ENCODE measurements at regions of chr14 and their contacts with region 1.

Region 1: GRCh38 chr14:68788996-68789820 is 3.7 kb downstream of the ZFP36L1 start:
- DNase-seq: peak; percentile 88
- ATAC-seq: peak; percentile 11
- H3K4me3 ChIP-seq: peak overlapping the region; percentile 77 to 100 (median 94)
- H3K4me3 Mint-ChIP-seq: peak overlapping the region; percentile 97
- H3K27ac ChIP-seq: peak overlapping the region; percentile 50 to 100
- H3K27ac Mint-ChIP-seq: peak overlapping the region; percentile 100
- H3K4me1 ChIP-seq: peaks cover 32 to 59% of the 10 kb centered on the region in 2 donors
- H3K4me1 Mint-ChIP-seq: peaks cover 56% of the 10 kb centered on the region
- H3K27me3 ChIP-seq: no peaks in the 10 kb centered on the region
- H3K27me3 Mint-ChIP-seq: no peaks in the 10 kb centered on the region
- CTCF ChIP-seq: peak; percentile 81

Region 2: GRCh38 chr14:68210729-68211299 is 578.4 kb before region 1 on chr14:
- CTCF ChIA-PET with region 1: no interaction called
- POLR2A ChIA-PET with region 1: no interaction called
- intact Hi-C with region 1: no loop called
- DNase-seq: peak; percentile 75
- ATAC-seq: peak; percentile 85
- H3K4me3 ChIP-seq: peak overlapping the region; percentile 9 to 45 (median 36)
- H3K4me3 Mint-ChIP-seq: peak overlapping the region; percentile 83
- H3K27ac ChIP-seq: peak overlapping the region; percentile 56 to 71
- H3K27ac Mint-ChIP-seq: peak overlapping the region; percentile 93
- H3K4me1 ChIP-seq: peaks cover 28 to 29% of the 10 kb centered on the region in 2 donors
- H3K4me1 Mint-ChIP-seq: peaks cover 43% of the 10 kb centered on the region
- H3K27me3 ChIP-seq: no peaks in the 10 kb centered on the region
- H3K27me3 Mint-ChIP-seq: no peaks in the 10 kb centered on the region
- CTCF ChIP-seq: no peak

Region 3: DNA sequence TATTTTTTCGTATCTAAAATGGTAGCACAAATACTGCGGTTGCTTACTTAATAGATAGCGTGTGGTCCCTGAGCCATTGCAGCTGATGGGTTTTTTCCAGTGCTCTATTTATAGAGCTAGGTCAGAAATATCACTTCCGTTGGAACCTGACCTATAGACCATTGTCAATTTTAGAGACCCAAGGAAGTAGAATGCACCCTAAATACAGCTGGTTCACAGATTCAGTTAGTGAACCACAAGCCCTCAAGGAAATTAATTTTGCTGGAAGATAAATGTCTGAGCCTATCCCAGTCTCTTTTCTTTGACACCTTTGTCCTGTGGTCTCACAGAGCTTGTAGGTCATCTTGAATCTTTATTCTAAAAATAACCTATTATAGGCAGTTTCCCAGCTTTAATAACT is 387.4 kb before region 1 on chr14:
- CTCF ChIA-PET with region 1: interaction called, 13 read pairs
- POLR2A ChIA-PET with region 1: interaction called, 4 read pairs
- intact Hi-C with region 1: loop called (anchors 2 kb)
- DNase-seq: peak; percentile 71
- ATAC-seq: peak; percentile 59
- H3K4me3 ChIP-seq: peak overlapping the region in 1 of 5 experiments; percentile 57
- H3K4me3 Mint-ChIP-seq: peak overlapping the region; percentile 82
- H3K27ac ChIP-seq: peak overlapping the region; percentile 91 to 96
- H3K27ac Mint-ChIP-seq: peak overlapping the region; percentile 97
- H3K4me1 ChIP-seq: peaks cover 91 to 94% of the 10 kb centered on the region in 2 donors
- H3K4me1 Mint-ChIP-seq: peaks cover 90% of the 10 kb centered on the region
- H3K27me3 ChIP-seq: no peaks in the 10 kb centered on the region
- H3K27me3 Mint-ChIP-seq: no peaks in the 10 kb centered on the region
- CTCF ChIP-seq: no peak

Region 4: DNA sequence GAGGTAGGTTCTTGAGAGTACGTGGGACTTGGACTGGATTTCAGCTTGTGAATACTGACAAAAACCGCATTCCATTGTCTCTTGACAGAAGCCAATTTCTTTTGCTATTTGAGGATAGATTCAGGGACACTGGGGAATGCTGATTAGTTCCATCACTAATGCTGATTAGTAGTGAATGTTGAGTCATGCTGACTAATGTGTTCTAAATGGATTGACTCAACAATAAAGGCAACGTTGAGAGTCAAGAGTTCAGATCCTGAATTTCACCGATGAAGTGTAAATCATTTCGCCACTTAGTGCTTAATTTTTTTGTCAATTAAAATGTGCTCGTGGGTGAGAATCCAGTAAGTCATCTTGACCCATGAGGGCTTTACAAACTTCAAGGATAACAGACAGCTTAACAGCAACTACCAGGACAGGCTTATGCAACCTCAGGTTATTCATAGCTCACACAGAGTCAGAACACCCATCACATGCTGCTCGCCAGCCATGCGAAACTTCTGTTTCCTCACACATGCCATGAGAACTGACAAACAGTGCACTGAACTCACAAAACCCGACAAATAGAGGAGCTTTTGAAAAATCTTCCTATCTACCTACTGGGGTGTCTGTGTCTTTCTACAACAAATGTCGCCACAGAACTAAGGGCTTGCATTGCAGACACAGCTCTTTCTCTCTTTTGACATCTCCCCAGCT is 312.8 kb before region 1 on chr14:
- CTCF ChIA-PET with region 1: interaction called, 11 read pairs
- POLR2A ChIA-PET with region 1: interaction called, 15 read pairs
- intact Hi-C with region 1: loop called (anchors 1 kb)
- DNase-seq: peak; percentile 89
- ATAC-seq: peak; percentile 90
- H3K4me3 ChIP-seq: peak overlapping the region in 1 of 5 experiments; percentile 21
- H3K4me3 Mint-ChIP-seq: peak overlapping the region; percentile 72
- H3K27ac ChIP-seq: peak overlapping the region; percentile 95 to 99
- H3K27ac Mint-ChIP-seq: peak overlapping the region; percentile 98
- H3K4me1 ChIP-seq: peaks cover 73 to 77% of the 10 kb centered on the region in 2 donors
- H3K4me1 Mint-ChIP-seq: peaks cover 84% of the 10 kb centered on the region
- H3K27me3 ChIP-seq: no peaks in the 10 kb centered on the region
- H3K27me3 Mint-ChIP-seq: no peaks in the 10 kb centered on the region
- CTCF ChIP-seq: no peak

Region 5: DNA sequence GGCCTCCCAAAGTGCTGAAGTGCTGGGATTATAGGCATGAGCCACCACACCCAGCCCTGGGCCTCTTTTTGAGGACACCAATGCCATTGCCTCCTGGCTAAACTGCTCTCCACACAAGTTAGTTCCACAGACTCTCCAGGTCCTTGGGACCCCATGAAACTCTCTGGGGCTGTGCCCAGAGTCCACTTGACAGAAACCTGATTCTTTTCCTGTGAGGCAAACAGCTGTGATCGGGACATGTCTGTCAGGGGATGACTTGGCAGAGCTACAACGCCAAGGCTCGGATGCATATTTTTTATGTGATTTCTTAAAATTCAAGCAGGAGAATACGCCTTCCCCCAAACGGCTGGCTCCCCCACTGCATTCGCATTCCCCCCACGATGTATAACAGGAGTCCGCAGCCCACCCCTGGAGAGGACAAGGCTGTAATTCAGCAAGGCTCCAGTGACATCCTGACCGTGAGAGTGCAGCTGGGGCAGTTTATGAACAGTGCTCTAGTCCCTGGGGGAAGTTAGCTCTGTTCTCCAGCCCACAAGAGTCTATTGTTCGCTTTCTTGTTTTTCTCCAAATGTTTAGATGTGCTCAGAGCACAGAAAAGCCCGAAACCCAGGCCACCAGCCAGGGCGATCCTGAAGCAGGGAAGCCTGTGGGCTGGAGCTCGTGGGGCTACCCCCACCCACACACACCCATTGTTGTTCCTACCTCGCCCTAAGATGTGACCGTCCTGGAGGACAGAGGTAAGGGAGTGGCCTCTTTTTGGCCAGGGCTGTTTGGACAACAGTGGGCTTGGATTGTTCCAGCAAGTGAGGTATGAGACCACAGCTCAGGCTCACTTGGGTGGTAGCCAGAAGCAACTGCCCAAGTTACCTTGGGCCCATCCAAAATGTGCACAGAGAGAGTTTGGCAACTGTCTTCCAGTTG is 155.9 kb before region 1 on chr14:
- CTCF ChIA-PET with region 1: no interaction called
- POLR2A ChIA-PET with region 1: interaction called, 7 read pairs
- intact Hi-C with region 1: loop called (anchors 5 kb)
- DNase-seq: peak; percentile 40
- ATAC-seq: peak; percentile 65
- H3K4me3 ChIP-seq: peak overlapping the region in 2 of 5 experiments; percentile 17 to 41
- H3K4me3 Mint-ChIP-seq: peak overlapping the region; percentile 61
- H3K27ac ChIP-seq: no peak overlapping the region
- H3K27ac Mint-ChIP-seq: peak overlapping the region; percentile 88
- H3K4me1 ChIP-seq: peaks cover 16 to 26% of the 10 kb centered on the region in 2 donors
- H3K4me1 Mint-ChIP-seq: peaks cover 21% of the 10 kb centered on the region
- H3K27me3 ChIP-seq: no peaks in the 10 kb centered on the region
- H3K27me3 Mint-ChIP-seq: no peaks in the 10 kb centered on the region
- CTCF ChIP-seq: no peak

Region 6: GRCh38 chr14:68741839-68742470 is 47.3 kb before region 1 on chr14:
- CTCF ChIA-PET with region 1: interaction called, 4 read pairs
- POLR2A ChIA-PET with region 1: interaction called, 5 read pairs
- intact Hi-C with region 1: loop called (anchors 2 kb)
- DNase-seq: peak; percentile 92
- ATAC-seq: peak; percentile 92
- H3K4me3 ChIP-seq: no peak overlapping the region
- H3K4me3 Mint-ChIP-seq: peak overlapping the region; percentile 56
- H3K27ac ChIP-seq: peak overlapping the region; percentile 42 to 44
- H3K27ac Mint-ChIP-seq: peak overlapping the region; percentile 88
- H3K4me1 ChIP-seq: peaks cover 34 to 52% of the 10 kb centered on the region in 2 donors
- H3K4me1 Mint-ChIP-seq: peaks cover 55% of the 10 kb centered on the region
- H3K27me3 ChIP-seq: no peaks in the 10 kb centered on the region
- H3K27me3 Mint-ChIP-seq: no peaks in the 10 kb centered on the region
- CTCF ChIP-seq: no peak

Region 7: GRCh38 chr14:68843471-68844209 is 54.4 kb after region 1 on chr14:
- CTCF ChIA-PET with region 1: interaction called, 12 read pairs
- POLR2A ChIA-PET with region 1: no interaction called
- intact Hi-C with region 1: loop called (anchors 2 kb)
- DNase-seq: peak; percentile 80
- ATAC-seq: peak; percentile 82
- H3K4me3 ChIP-seq: peak overlapping the region in 3 of 5 experiments; percentile 18 to 50 (median 24)
- H3K4me3 Mint-ChIP-seq: peak overlapping the region; percentile 62
- H3K27ac ChIP-seq: no peak overlapping the region
- H3K27ac Mint-ChIP-seq: no peak overlapping the region
- H3K4me1 ChIP-seq: peaks cover 6 to 7% of the 10 kb centered on the region in 2 donors
- H3K4me1 Mint-ChIP-seq: peaks cover 14% of the 10 kb centered on the region
- H3K27me3 ChIP-seq: no peaks in the 10 kb centered on the region
- H3K27me3 Mint-ChIP-seq: peaks cover 6% of the 10 kb centered on the region
- CTCF ChIP-seq: peak; percentile 93

Region 8: DNA sequence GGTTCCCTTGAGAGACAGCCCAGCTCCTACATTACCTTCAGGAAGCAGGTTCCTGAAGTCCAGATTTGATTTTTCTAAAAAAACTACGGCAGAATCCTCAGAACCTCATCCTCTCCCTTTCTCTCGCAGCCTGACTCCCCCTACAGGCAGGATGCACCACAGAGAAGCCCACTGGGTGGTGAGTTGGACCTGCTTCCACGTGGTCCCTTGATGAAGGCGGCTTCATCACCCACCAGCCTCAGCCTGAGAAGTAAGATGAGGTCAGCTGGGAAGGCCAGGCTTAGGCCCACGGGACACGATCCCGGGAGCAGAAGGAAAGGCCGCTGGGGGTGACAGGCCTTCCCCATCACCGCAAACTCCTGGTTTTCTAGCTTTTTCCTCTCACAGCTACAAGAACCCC is 106.9 kb after region 1 on chr14:
- CTCF ChIA-PET with region 1: no interaction called
- POLR2A ChIA-PET with region 1: no interaction called
- intact Hi-C with region 1: no loop called
- DNase-seq: no peak
- ATAC-seq: no peak
- H3K4me3 ChIP-seq: no peak overlapping the region
- H3K4me3 Mint-ChIP-seq: no peak overlapping the region
- H3K27ac ChIP-seq: no peak overlapping the region
- H3K27ac Mint-ChIP-seq: no peak overlapping the region
- H3K4me1 ChIP-seq: no peaks in the 10 kb centered on the region
- H3K4me1 Mint-ChIP-seq: peaks cover 2% of the 10 kb centered on the region
- H3K27me3 ChIP-seq: peaks cover 0 to 5% (median 2%) of the 10 kb centered on the region in 4 experiments
- H3K27me3 Mint-ChIP-seq: peaks cover 29% of the 10 kb centered on the region
- CTCF ChIP-seq: no peak

Measured in B cell (primary cell).